ENCODE measurements at regions of chr1 and their contacts with region 1.

Region 1: GRCh38 chr1:227762233-227762911 is 27.1 kb downstream of the SNAP47 start:
- DNase-seq: peak; percentile 93
- ATAC-seq: peak; percentile 76

Region 2: GRCh38 chr1:227489572-227489971 is 272.8 kb before region 1 on chr1:
- intact Hi-C with region 1: loop called (anchors 10 kb)
- DNase-seq: peak; percentile 41
- ATAC-seq: peak; percentile 97

Measured in left ventricle myocardium superior (tissue), 1 donor.